ENCODE measurements at regions of chr1 and their contacts with region 1.

Region 1: DNA sequence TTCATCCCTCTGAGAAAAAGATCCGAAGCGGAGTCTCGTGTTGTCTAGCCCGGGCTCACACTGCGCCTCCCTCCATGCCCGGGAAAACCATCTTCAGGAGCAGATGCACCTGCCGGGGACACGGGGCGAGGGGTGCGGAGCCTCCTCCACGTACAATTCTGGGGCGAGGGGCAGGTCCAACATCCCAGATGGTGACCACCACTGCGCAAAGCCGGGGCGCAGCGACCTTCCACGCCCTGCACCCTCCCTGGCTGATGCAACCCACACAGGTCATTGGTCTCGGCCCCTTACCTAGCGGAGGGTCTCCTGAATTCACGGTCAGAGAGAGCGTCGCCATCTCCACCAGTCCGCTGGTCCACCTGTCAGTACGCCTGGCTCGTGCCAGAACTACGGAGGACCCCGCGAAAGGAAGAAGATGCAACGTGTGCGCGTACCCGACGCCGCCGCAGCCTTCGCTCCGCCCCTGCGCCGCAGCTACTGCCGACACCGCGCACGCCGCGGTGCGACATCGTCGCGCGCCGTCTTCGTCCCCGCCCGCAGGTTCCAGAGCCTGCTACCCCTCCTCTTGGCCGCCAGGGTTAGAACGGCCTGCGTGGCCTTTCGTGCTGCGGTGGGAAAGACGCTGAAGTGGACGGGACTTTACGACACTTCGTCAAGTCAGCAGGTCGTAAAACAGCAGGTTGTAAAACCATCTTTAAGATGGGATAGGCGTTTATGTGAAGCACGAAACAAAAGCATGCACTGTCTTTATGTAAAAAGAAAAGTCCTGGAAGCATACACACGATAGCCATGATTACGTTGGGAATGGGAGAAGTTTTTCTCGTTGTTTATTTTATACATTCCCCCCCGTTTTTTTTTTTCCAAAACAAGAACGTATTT is at the start of gene EPRS1:
- DNase-seq: peak; percentile 96
- ATAC-seq: peak; percentile 100
- total RNA-seq, gene EPRS1: 60.1 TPM

Region 2: GRCh38 chr1:220094016-220094911 is 48.0 kb after region 1 on chr1 and contains the start of gene IARS2:
- intact Hi-C with region 1: loop called (anchors 2 kb)
- DNase-seq: peak; percentile 94
- ATAC-seq: peak; percentile 96
- total RNA-seq, gene IARS2: 82.3 TPM

Measured in Right ventricle myocardium inferior (tissue), 1 donor.